ENCODE measurements at regions of chr20 and their contacts with region 1.

Region 1: DNA sequence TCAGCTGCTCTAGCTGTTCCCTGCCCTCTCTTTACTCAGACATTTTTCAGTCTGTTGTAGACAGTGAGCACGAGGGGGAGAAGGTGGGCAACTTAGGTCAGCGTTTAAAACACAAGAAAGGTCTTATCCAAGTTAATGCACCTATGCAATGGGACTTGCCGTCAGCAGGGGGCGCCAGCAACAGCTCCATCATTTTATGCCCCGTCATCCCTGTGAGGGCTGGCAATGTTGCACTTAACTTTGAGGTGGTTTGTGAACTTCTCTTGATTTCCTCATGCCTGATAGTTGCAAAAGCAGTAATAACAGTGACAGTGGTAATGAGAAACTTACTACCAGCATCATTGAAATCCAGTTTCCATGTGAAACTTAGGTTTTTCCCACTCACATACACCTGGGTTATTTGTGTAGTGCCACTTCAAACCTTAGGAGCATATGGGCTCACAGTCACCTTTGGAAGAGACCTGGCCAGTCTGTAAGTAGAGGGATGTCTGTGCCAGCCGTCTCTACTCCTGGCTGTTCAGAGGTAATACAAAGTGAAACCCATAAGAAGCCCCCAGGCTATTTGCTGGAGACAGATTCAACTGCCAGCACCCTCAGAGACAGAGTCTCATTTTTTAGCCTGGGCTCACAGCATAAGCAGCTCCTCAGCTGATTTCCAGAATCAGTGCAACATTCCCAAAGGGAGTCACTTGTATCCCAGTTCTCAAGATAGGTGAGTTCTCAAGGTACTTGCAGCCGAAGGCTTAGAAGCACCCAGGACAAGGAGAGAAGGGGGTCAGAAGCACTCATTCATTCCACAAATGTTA is 44.8 kb upstream of the ID1 start:
- DNase-seq: peak; percentile 54 to 82 (median 78)
- ATAC-seq: peak; percentile 73
- H3K4me3 ChIP-seq: no peak overlapping the region
- H3K4me3 Mint-ChIP-seq: no peak overlapping the region
- H3K27ac ChIP-seq: no peak overlapping the region
- H3K27ac Mint-ChIP-seq: peak overlapping the region; percentile 4
- H3K4me1 ChIP-seq: peaks cover 8% of the 10 kb centered on the region
- H3K4me1 Mint-ChIP-seq: peaks cover 7% of the 10 kb centered on the region
- H3K27me3 ChIP-seq: no peaks in the 10 kb centered on the region
- H3K27me3 Mint-ChIP-seq: no peaks in the 10 kb centered on the region
- CTCF ChIP-seq: peak; percentile 79

Region 2: DNA sequence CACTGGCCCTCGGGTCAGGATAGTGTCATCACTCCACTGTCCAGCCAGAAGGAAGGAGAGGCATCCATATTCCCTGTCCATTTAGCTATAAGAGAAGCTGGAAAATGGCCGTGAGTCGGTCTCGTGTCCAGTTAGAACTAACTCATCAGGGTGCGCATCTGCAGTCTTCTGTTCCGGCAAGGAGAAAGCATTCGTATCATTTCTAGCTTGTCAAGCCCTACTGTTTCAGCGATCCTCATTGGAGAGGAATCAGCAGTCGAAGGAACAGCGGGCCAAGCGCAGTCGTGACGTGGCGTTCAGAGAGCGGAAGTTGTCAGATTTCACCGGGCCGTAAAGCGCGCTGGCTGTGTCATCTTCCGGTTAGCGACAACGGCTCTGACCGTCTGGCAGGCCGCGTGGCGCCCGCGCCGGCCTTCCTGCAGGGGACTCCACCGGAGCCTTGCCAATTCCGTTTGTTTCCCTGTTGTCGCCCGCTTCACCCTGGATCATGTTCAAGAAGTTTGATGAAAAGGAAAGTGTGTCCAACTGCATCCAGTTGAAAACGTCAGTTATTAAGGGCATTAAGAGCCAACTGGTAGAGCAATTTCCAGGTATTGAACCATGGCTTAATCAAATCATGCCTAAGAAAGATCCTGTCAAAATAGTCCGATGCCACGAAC is 13.2 kb before region 1 on chr20:
- CTCF ChIA-PET with region 1: interaction called, 160 read pairs
- POLR2A ChIA-PET with region 1: no interaction called
- intact Hi-C with region 1: no loop called
- DNase-seq: peak; percentile 61 to 92 (median 78)
- ATAC-seq: peak; percentile 86
- H3K4me3 ChIP-seq: peak overlapping the region; percentile 62 to 70
- H3K4me3 Mint-ChIP-seq: peak overlapping the region; percentile 91
- H3K27ac ChIP-seq: peak overlapping the region; percentile 88 to 91
- H3K27ac Mint-ChIP-seq: peak overlapping the region; percentile 98
- H3K4me1 ChIP-seq: peaks cover 12% of the 10 kb centered on the region
- H3K4me1 Mint-ChIP-seq: peaks cover 33% of the 10 kb centered on the region
- H3K27me3 ChIP-seq: no peaks in the 10 kb centered on the region
- H3K27me3 Mint-ChIP-seq: no peaks in the 10 kb centered on the region
- CTCF ChIP-seq: no peak

Region 3: DNA sequence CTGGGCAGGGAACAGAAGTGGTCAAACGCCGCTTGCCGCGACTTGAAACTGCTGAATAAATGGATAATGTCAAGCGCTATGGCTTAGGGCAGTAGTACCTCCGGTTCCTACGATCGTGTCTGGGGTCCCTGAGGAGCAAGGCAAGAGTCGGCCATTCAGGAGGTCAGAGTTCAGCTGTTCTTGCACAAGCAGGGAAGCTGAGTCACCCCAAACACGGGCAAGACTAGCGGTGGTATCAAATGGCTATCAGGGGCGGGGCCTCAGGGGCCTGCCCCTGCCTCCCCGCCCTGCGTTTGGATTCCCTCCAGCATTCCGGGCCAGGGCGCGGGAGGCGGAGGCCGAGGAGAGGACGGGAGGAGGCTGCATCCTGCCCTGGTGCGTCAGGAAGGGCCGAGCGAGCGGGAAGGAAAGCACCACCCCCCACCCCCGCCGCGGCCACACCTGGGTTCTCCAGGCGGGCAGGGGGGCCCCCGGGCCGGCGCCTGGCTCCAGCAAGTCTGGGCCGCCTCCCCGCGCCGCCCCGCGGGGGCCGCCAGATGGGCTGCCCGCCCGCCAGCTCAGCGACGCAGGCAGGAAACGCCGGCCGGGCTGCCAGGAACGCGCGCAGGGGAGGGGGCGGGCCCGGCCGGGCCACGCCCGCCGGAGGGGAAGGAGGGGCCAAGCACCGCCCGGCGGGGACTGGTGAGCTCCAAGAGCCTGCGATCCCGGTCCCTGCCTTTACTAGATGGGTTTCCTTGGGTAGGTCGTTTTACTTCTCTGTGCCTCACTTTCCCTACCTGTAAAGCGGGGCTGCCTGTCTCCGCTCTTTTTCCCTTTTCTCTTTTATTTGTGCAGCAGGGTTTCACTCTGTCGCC is 12.6 kb after region 1 on chr20:
- CTCF ChIA-PET with region 1: interaction called, 160 read pairs
- POLR2A ChIA-PET with region 1: interaction called, 5 read pairs
- intact Hi-C with region 1: loop called in 1 of 2 experiments (anchors 1 kb)
- DNase-seq: peak; percentile 75 to 93 (median 85)
- ATAC-seq: peak; percentile 91
- H3K4me3 ChIP-seq: peak overlapping the region; percentile 75 to 79
- H3K4me3 Mint-ChIP-seq: peak overlapping the region; percentile 87
- H3K27ac ChIP-seq: peak overlapping the region; percentile 51 to 78
- H3K27ac Mint-ChIP-seq: peak overlapping the region; percentile 84
- H3K4me1 ChIP-seq: peaks cover 16% of the 10 kb centered on the region
- H3K4me1 Mint-ChIP-seq: peaks cover 26% of the 10 kb centered on the region
- H3K27me3 ChIP-seq: no peaks in the 10 kb centered on the region
- H3K27me3 Mint-ChIP-seq: no peaks in the 10 kb centered on the region
- CTCF ChIP-seq: no peak

Region 4: GRCh38 chr20:31580706-31581105 is 20.4 kb after region 1 on chr20:
- CTCF ChIA-PET with region 1: interaction called, 12 read pairs
- POLR2A ChIA-PET with region 1: interaction called, 3 read pairs
- intact Hi-C with region 1: no loop called
- DNase-seq: no peak
- ATAC-seq: no peak
- H3K4me3 ChIP-seq: no peak overlapping the region
- H3K4me3 Mint-ChIP-seq: no peak overlapping the region
- H3K27ac ChIP-seq: no peak overlapping the region
- H3K27ac Mint-ChIP-seq: no peak overlapping the region
- H3K4me1 ChIP-seq: peaks cover 4% of the 10 kb centered on the region
- H3K4me1 Mint-ChIP-seq: peaks cover 12% of the 10 kb centered on the region
- H3K27me3 ChIP-seq: no peaks in the 10 kb centered on the region
- H3K27me3 Mint-ChIP-seq: peaks cover 6% of the 10 kb centered on the region
- CTCF ChIP-seq: no peak

Region 5: GRCh38 chr20:31605031-31605901 is 45.0 kb after region 1 on chr20 and contains the start of gene ID1:
- CTCF ChIA-PET with region 1: interaction called, 427 read pairs
- POLR2A ChIA-PET with region 1: interaction called, 5 read pairs
- intact Hi-C with region 1: no loop called
- DNase-seq: peak; percentile 78 to 93 (median 89)
- ATAC-seq: peak; percentile 89
- H3K4me3 ChIP-seq: peak within 1 kb of the TSS; percentile 57 to 68
- H3K4me3 Mint-ChIP-seq: peak within 1 kb of the TSS; percentile 93
- H3K27ac ChIP-seq: peak within 1 kb of the TSS in 1 of 2 experiments; percentile 30
- H3K27ac Mint-ChIP-seq: peak within 1 kb of the TSS; percentile 60
- H3K4me1 ChIP-seq: peaks cover 24% of the 10 kb centered on the region
- H3K4me1 Mint-ChIP-seq: peaks cover 26% of the 10 kb centered on the region
- H3K27me3 ChIP-seq: peaks cover 5 to 27% of the 10 kb centered on the region in 2 experiments
- H3K27me3 Mint-ChIP-seq: peaks cover 43% of the 10 kb centered on the region
- CTCF ChIP-seq: no peak
- total RNA-seq, gene ID1: 8.1 to 11.0 TPM